PC-9 (cell line): ENCODE measurements at regions of chr10 and their contacts with region 1.

Region 1: DNA sequence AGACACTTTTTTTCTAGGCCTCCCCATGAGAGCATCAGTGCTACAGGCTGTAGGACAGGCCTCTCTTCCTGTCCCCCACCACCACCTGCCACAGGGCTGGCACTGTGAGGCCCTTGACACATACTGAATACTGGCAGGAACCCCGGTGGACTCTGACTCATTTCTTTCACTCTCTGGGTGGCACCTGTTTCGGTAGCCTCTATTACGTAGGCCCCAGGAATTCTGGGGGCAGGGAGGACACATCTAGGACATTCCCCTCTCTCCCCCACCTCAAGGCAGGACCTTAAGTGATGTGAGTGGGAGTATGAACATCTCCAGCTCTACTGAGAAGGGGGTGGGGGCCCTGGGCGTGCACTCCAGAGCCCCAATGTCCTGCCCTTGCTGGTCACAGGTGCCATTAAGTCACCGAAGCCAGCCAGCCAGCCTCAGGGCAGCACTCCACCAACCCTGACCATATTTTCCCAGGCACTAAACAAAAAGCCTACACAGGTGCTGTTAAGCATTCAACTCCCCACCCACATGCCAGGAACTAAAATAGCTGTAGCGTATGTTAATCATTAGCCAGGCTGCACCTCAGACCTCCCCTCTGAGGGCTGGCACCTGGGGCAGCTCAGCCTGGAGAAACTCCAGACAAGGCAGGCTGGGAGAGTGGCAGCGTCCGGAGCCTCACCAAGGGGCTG is 8.9 kb downstream of the ANXA11 start:
- DNase-seq: peak; percentile 92 to 99
- H3K4me3 ChIP-seq: peak overlapping the region; percentile 25; the same call in 1 of the 2 replicates
- H3K27ac ChIP-seq: peak overlapping the region; percentile 93
- H3K4me1 ChIP-seq: peaks cover 86% of the 10 kb centered on the region
- H3K27me3 ChIP-seq: no peaks in the 10 kb centered on the region
- CTCF ChIP-seq: no peak

Region 2: DNA sequence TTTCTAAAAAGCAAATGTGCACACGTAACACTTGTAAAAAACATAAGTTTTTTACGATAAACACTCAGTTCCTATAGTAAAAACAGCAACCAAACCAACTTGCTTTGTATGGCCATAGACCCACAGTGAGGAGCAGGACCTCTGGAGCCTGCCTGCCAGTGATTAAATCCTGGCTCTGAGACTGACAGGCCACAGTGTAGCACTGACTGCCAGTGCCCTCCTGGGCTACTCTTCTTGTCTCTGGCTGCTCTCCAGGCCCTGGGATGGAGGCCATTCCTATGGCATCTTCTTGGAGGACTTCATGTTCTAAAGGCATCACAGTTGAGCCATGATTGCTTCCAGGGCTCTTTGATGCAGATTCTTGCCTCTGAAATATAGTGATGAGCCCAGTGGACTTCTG is 140.7 kb before region 1 on chr10:
- CTCF ChIA-PET with region 1: no interaction called
- POLR2A ChIA-PET with region 1: no interaction called
- intact Hi-C with region 1: no loop called
- DNase-seq: no peak
- H3K4me3 ChIP-seq: no peak overlapping the region
- H3K27ac ChIP-seq: no peak overlapping the region
- H3K4me1 ChIP-seq: no peaks in the 10 kb centered on the region
- H3K27me3 ChIP-seq: no peaks in the 10 kb centered on the region
- CTCF ChIP-seq: no peak

Region 3: DNA sequence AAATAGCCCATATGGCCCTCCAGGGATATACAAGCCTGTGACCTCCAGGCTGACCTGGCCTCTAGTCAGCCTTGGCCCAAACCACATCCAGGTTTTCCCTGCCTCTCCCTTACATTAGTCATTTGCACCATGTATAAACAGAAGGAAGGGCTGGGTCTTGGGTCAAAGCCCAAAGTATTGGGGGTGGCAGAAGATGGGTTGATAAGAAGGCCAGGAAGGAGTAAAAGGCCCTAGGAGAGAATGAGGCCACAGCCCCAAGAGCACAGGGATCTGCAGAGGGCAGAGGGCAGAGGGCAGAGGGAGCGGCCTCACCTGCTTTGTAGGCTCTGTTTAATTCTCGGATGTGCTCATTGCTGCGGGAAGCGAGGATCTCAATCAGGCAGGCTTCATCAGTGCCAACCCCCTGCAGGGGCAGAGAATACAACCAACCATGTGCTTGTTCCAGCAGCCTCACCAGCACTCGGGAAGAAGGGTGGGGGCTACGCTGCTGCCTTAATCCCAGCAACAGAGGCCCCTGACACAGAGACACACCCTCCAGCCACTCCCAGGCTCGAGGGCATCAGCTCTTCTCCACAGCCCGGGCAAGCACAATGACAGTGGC is 32.6 kb before region 1 on chr10:
- CTCF ChIA-PET with region 1: no interaction called
- POLR2A ChIA-PET with region 1: interaction called, 3 read pairs
- intact Hi-C with region 1: loop called (anchors 1 kb)
- DNase-seq: peak; percentile 79 to 96
- H3K4me3 ChIP-seq: no peak overlapping the region
- H3K27ac ChIP-seq: peak overlapping the region; percentile 62
- H3K4me1 ChIP-seq: peaks cover 72% of the 10 kb centered on the region
- H3K27me3 ChIP-seq: no peaks in the 10 kb centered on the region
- CTCF ChIP-seq: no peak